ENCODE measurements at regions of chr1 and their contacts with region 1.

Region 1: DNA sequence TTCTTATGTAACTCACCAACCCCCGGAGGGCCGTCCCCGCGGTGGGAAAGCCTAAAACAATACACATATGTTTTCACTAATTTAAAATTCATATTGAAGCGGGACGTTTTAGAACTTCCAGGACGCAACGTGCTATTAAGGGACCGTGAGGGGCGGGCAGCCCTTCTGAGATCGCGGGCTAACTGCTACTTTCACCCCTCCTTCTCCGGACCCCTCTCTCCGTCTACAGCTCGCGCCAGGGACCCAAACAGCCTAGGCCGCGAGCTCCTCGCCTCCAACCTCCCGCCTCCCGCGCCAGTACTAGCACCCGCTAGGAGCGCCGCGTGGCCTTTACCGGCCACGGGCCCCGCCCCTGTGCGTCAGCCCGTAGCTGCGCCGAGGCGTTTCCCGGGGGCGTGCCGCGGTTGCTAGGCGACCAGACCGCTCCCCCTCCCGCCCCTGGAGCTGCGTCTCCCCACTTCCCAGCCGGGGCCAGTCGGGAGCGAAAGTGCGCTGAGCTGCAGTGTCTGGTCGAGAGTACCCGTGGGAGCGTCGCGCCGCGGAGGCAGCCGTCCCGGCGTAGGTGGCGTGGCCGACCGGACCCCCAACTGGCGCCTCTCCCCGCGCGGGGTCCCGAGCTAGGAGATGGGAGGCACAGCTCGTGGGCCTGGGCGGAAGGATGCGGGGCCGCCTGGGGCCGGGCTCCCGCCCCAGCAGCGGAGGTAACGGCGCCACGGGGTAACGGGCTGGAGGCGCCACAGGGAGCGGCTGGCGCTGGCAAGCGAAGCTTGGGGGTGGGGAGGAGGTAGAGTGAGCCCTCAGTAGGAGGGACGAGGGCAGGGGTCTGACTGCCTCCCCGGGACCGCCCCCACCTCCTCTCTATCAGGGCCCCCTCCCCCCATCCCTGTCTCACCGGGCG is at the start of gene DYRK3:
- DNase-seq: peak; percentile 97
- ATAC-seq: peak; percentile 85
- H3K4me3 Mint-ChIP-seq: peak within 1 kb of the TSS; percentile 76
- H3K27ac Mint-ChIP-seq: peak within 1 kb of the TSS; percentile 74
- H3K4me1 Mint-ChIP-seq: peaks cover 34% of the 10 kb centered on the region
- H3K27me3 Mint-ChIP-seq: no peaks in the 10 kb centered on the region; the same call in 1 of the 2 replicates
- CTCF ChIP-seq: no peak
- total RNA-seq, gene DYRK3: 6.7 to 7.8 TPM (median 6.7 TPM) in 3 replicates

Region 2: GRCh38 chr1:206563367-206564207 is 71.7 kb before region 1 on chr1:
- CTCF ChIA-PET with region 1: no interaction called
- POLR2A ChIA-PET with region 1: no interaction called
- DNase-seq: no peak
- ATAC-seq: no peak
- H3K4me3 Mint-ChIP-seq: no peak overlapping the region
- H3K27ac Mint-ChIP-seq: no peak overlapping the region
- H3K4me1 Mint-ChIP-seq: peaks cover 19% of the 10 kb centered on the region
- H3K27me3 Mint-ChIP-seq: peaks cover 5% of the 10 kb centered on the region
- CTCF ChIP-seq: no peak

Region 3: DNA sequence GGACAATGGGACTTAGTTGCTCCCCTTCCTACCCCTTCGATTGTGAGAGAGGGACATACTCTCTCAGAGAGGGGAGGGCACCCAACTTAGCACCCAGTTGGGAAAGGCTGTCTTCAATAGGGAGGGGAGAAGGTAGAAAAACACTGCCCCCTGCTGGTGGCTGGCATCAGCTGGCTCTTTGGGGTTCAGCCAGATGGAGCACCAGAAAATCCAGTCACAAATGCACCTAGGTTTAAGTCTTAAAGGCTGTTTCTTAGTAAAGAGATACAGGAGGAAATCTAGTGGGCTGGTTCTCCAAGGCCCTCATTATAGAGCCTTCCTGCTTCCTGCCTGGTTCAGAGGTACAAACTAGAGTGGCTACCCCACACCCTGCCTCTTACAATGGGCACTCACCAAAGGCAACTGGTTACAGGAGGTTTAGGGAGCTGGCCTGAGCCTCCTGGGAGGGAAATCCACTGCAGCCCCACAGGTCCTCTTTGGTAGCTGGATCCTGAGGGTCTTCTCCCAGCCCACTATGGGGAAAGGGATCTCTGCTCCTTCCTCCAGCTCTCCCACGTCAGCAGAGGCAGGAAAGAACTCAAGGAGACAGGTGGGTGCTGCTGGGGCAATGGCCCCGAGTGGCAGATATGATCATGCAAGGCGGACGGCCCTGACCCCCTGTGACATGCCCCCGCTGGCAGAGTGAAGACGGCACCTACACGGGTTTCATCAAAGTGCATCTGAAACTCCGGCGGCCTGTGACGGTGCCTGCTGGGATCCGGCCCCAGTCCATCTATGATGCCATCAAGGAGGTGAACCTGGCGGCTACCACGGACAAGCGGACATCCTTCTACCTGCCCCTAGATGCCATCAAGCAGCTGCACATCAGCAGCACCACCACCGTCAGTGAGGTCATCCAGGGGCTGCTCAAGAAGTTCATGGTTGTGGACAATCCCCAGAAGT is 51.4 kb before region 1 on chr1:
- CTCF ChIA-PET with region 1: interaction called, 11 read pairs
- POLR2A ChIA-PET with region 1: no interaction called
- DNase-seq: peak; percentile 84
- ATAC-seq: peak; percentile 84
- H3K4me3 Mint-ChIP-seq: no peak overlapping the region
- H3K27ac Mint-ChIP-seq: peak overlapping the region; percentile 79
- H3K4me1 Mint-ChIP-seq: peaks cover 4% of the 10 kb centered on the region
- H3K27me3 Mint-ChIP-seq: no peaks in the 10 kb centered on the region
- CTCF ChIP-seq: peak; percentile 90

Region 4: DNA sequence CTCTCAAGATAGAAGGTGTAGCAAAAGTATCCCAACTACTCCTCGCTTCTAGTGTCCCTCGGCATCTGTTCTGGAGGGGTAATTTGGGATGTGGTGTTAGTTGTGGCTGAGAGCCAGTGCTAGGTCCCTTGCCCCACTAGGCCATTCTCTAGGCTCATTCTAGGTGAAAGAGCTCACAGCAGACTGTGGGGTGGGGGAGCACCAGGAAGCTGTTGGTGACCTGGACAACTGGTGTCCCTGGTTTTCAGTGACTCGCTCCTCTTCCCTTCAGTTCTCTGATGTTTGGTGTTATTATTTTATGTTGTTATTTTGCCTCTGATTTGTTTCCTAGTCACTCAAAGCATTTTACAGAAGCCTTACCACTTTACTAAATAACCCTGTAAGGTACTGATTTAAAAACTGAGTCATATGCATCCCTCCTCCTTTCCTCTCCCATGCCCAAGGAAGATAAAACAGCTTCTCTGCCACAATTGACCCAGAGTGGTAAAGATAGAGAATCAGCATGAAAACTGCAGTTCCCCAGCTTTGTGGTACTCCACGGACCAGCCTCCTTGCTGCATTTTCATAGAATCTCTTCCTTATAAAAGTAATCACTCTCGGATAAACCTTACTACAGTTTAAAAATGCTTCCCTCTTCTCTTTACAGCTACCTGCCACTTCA is 14.1 kb after region 1 on chr1:
- CTCF ChIA-PET with region 1: interaction called, 659 read pairs
- POLR2A ChIA-PET with region 1: interaction called, 3 read pairs
- DNase-seq: no peak
- ATAC-seq: no peak
- H3K4me3 Mint-ChIP-seq: no peak overlapping the region
- H3K27ac Mint-ChIP-seq: no peak overlapping the region
- H3K4me1 Mint-ChIP-seq: peaks cover 13% of the 10 kb centered on the region
- H3K27me3 Mint-ChIP-seq: no peaks in the 10 kb centered on the region
- CTCF ChIP-seq: no peak

Region 5: DNA sequence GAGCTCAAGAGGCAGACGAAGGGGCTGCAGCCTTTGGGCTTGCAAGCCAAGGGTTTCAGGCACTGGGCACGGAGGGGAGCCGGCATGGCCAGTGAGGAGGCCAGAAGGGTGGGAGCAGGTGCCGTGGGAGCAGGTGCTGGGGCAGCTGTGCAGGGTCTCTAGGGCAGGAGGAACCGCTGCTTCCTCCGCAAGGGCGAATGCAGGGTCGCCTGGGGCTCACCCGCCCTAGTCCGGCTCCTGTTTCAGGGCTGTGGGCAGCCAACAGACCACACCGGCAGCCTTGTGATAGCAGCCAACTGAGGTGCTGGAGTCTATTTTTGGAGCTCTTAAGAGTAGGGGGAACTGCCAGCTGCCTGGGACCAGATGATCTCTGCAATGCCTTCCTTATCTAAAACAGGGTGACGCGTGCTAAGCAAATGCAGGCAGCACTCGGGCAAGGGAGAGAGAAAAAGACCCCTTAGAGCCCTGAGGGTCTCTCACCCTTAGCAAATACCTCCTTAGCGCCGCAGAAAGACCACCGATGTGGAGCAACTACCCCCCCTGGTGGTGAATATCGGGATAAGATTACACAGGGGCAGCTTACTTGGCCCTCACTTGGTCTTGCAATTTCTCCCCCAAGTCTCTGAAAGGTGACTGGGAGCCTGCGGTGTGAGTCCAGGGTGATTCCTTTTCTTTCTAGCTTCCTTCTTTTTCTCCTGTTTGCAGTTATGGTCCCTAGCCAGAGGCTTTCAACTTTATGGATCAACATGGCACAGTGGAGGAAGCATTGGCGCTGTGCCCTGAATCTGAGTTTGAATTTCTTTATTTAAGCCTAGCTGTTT is 28.7 kb after region 1 on chr1:
- CTCF ChIA-PET with region 1: interaction called, 659 read pairs
- POLR2A ChIA-PET with region 1: interaction called, 15 read pairs
- DNase-seq: peak; percentile 83
- ATAC-seq: peak; percentile 90
- H3K4me3 Mint-ChIP-seq: peak overlapping the region; percentile 58
- H3K27ac Mint-ChIP-seq: no peak overlapping the region
- H3K4me1 Mint-ChIP-seq: peaks cover 9% of the 10 kb centered on the region; the same call in 1 of the 2 replicates
- H3K27me3 Mint-ChIP-seq: peaks cover 26% of the 10 kb centered on the region
- CTCF ChIP-seq: peak; percentile 86

Region 6: GRCh38 chr1:206706298-206706791 is 71.0 kb after region 1 on chr1:
- CTCF ChIA-PET with region 1: interaction called, 14 read pairs
- POLR2A ChIA-PET with region 1: no interaction called
- DNase-seq: no peak
- ATAC-seq: peak; percentile 50
- H3K4me3 Mint-ChIP-seq: no peak overlapping the region
- H3K27ac Mint-ChIP-seq: no peak overlapping the region
- H3K4me1 Mint-ChIP-seq: peaks cover 76% of the 10 kb centered on the region
- H3K27me3 Mint-ChIP-seq: no peaks in the 10 kb centered on the region
- CTCF ChIP-seq: no peak

Region 7: DNA sequence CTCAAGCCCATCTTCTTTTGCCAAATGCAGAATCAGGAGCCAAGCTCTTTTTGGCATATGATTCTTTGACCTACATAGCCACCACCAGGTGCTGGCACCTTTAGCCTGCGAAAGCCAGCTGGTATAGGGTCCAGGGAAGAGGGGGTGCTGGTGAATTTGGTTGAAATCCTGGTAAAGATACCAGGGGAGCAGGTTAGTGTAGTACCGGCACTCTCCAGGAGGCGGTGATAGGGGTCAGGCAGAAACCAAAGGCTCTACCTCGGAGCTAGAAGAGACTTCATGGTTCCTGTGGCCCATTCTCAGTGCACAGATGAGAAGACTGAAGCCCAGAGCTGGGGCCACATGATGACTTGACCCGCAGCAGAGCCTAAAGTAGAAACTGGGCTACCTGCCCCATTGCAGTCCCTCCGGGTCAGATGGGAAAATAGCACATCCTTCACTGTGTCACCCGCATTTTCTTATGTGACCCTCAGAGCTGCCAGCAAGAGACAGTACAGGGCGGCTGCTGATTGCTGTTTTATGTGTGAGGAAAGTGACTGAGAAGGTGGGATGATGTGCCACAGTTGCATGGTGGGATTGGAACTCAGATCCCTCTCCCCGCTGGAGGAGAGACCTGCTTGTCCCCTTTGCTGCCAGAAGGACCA is 99.3 kb after region 1 on chr1:
- CTCF ChIA-PET with region 1: interaction called, 16 read pairs
- POLR2A ChIA-PET with region 1: no interaction called
- DNase-seq: peak; percentile 87
- ATAC-seq: peak; percentile 83
- H3K4me3 Mint-ChIP-seq: no peak overlapping the region
- H3K27ac Mint-ChIP-seq: no peak overlapping the region
- H3K4me1 Mint-ChIP-seq: peaks cover 11% of the 10 kb centered on the region
- H3K27me3 Mint-ChIP-seq: no peaks in the 10 kb centered on the region; the same call in 1 of the 2 replicates
- CTCF ChIP-seq: peak; percentile 87

Measured in WTC11 (cell line).